BJ (cell line): ENCODE measurements at regions of chr3 and their contacts with region 1.

Region 1: DNA sequence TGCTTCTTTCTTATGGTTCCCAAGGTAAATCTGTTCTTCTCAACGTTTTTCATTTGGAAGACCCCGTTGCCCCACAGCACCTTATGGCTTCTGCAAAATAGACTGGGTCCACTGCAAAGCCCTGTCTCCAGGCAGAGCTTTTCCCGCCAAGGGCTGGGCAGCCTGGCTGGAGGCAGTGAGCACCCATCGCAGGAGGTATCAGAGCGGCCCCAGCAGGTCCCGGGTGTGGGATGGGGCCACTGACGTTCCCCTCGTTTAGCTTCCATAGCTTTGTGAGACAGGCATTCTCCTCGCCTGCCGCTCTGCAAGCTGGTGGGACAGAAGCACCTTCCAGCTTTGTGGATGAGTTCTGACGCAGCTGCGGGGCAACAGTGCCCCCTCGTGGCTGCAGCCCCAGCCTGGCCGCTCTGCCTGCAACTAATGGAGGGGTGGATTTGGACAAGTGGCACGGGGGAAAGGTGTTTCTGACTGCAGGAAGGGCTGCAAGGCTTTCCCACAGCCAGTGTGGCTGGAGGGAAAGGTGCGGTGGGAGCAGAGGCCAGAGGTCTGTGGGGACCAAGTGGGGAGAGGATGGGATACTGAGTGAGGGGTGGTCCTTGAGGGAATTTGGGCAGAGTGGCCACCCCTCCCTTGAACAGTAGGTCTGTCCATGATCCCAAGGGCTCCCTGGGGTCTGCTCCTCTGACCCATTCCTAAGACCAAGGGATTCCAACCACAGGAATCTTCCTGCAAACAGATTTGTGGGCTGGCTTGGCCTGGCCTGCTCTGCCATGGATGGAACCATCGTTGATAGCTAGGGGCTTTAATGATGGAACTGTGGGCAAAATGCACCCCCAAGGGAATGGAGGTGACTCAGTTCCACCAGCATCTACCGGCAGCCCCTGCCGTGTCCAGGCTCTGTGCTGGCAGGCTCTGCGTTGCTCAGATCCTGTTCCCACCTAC is 99.4 kb downstream of the FBLN2 start:
- DNase-seq: no peak
- H3K4me3 ChIP-seq: no peak overlapping the region
- H3K27me3 ChIP-seq: no peaks in the 10 kb centered on the region
- CTCF ChIP-seq: peak; percentile 99

Region 2: GRCh38 chr3:12994607-12995388 is 653.5 kb before region 1 on chr3:
- CTCF ChIA-PET with region 1: no interaction called
- POLR2A ChIA-PET with region 1: no interaction called
- DNase-seq: peak; percentile 34
- H3K4me3 ChIP-seq: peak overlapping the region; percentile 76
- H3K27me3 ChIP-seq: no peaks in the 10 kb centered on the region
- CTCF ChIP-seq: peak; percentile 85

Region 3: DNA sequence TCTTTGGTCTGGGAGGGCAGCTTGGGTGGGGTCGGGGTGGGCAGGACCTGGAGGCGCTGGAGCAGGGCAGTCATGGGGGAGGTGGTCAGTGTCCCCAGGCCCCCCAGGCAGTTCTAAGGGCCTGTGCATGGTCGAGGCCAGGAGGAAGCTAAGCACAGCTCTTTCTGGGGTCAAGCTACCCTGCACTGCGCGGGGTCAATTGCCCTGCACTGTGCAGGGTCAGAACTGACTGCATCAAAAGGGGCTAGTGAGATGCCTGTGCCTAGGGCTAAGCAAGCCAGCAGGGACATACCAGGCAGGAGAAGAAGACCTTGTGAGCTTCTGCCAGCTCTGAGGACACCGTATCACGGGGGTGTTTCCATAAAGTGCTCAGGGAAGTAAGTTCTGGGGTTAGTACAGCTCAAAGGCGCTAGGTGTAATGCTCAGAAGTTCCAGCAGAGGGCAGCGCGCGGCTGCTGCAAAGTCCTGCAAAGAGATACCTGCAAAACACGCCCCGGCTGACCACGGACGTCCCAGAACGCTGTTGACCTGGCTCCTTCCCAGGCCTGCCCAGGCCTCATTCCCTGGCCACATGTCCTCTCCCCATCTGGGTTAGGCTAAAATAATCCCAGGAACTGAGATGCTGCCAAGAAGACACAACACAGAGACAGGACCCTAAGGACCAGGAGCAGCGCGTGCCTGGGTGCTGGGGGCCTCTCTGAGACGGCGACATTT is 556.3 kb before region 1 on chr3:
- CTCF ChIA-PET with region 1: interaction called, 19 read pairs
- POLR2A ChIA-PET with region 1: no interaction called
- DNase-seq: peak; percentile 8
- H3K4me3 ChIP-seq: no peak overlapping the region
- H3K27me3 ChIP-seq: peaks cover 4% of the 10 kb centered on the region; the same call in 1 of the 2 replicates
- CTCF ChIP-seq: peak; percentile 96

Region 4: DNA sequence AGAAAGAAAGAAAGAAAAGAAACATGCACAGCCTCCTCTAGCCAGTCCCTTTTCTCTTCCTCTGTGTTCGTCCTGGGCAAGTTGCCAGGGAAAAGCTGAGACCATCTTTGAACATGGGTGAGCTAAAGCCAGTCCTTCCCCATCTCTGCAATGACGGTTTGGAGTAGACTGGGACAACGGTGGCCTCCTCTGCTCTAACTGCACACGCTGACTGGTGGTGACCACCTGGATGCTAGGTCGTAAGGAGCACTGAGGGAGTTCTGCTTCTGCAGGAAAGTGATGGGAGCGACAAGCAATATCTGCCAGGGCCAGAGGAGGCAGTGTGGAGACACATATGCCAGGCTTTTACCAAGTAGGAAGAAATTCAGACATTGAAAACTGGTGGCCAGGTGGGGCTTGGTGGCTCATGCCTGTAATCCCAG is 339.9 kb before region 1 on chr3:
- CTCF ChIA-PET with region 1: no interaction called
- POLR2A ChIA-PET with region 1: no interaction called
- DNase-seq: no peak
- H3K4me3 ChIP-seq: no peak overlapping the region
- H3K27me3 ChIP-seq: no peaks in the 10 kb centered on the region
- CTCF ChIP-seq: peak; percentile 38

Region 5: GRCh38 chr3:13479581-13480339 is 168.6 kb before region 1 on chr3 and contains the start of gene HDAC11:
- CTCF ChIA-PET with region 1: interaction called, 107 read pairs
- POLR2A ChIA-PET with region 1: no interaction called
- DNase-seq: peak; percentile 78
- H3K4me3 ChIP-seq: peak within 1 kb of the TSS; percentile 68
- H3K27me3 ChIP-seq: 0 out of 2 replicates have a peak, but pooled peaks cover under 1% of the 10 kb centered on the region
- CTCF ChIP-seq: 0 out of 2 replicates have a peak, but pooled peaks have one; percentile 14
- polyA plus RNA-seq, gene HDAC11: 9.8 and 16.0 TPM in 2 replicates

Region 6: DNA sequence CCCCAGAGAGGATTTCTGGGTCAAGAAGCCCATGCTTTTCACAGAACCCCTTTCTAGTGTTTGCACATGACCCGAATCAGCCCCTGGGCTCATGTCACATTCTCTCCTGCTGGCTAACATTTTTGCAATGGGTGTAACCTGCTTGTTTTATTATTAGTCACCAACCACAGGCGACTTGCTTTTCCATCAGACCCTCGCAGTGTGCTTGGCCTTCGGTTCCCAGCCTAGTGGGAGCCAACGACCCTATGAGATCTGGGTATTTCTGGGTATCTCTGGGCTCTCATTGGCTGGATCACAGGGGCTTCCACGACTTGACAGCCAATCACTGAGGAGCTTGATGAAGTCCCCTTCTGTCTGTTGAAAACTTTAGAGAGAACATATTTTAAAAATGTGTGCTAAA is 110.4 kb before region 1 on chr3:
- CTCF ChIA-PET with region 1: interaction called, 17 read pairs
- POLR2A ChIA-PET with region 1: no interaction called
- DNase-seq: peak; percentile 92
- H3K4me3 ChIP-seq: no peak overlapping the region
- H3K27me3 ChIP-seq: no peaks in the 10 kb centered on the region
- CTCF ChIP-seq: no peak

Region 7: DNA sequence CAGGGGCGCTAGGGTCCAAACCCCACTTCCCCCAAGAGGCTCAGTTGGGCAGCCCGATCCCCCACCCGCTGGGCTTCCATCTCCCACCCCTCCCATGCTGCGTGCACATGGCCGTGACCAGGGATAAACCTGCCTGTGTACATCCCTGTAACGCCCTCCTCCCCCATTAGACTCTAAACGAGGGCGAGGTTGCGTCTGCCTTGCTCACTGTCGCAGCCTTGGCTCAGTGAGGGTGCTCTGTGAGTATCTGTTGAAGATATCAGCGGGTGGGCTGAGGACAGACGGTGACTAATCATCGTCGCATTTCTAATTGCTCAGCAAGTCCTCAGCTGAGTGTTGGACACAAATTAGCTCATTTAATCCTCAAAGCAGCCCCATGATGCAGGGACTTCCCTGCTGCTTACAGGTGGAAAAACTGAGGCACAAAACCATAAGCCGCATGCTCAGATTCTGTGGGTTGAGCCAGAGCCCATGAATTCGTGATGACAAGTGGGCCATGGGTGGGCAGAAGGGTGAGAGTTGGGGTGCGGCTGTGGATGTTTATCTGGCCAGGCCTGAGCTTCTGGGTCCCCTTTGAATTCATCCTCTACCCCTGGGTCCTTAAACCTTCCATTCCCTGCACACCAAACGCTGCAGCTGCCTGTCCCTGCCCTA is 73.4 kb before region 1 on chr3:
- CTCF ChIA-PET with region 1: interaction called, 10 read pairs
- POLR2A ChIA-PET with region 1: no interaction called
- DNase-seq: no peak
- H3K4me3 ChIP-seq: no peak overlapping the region
- H3K27me3 ChIP-seq: no peaks in the 10 kb centered on the region
- CTCF ChIP-seq: no peak